ENCODE measurements at regions of chr5 and their contacts with region 1.

Region 1: DNA sequence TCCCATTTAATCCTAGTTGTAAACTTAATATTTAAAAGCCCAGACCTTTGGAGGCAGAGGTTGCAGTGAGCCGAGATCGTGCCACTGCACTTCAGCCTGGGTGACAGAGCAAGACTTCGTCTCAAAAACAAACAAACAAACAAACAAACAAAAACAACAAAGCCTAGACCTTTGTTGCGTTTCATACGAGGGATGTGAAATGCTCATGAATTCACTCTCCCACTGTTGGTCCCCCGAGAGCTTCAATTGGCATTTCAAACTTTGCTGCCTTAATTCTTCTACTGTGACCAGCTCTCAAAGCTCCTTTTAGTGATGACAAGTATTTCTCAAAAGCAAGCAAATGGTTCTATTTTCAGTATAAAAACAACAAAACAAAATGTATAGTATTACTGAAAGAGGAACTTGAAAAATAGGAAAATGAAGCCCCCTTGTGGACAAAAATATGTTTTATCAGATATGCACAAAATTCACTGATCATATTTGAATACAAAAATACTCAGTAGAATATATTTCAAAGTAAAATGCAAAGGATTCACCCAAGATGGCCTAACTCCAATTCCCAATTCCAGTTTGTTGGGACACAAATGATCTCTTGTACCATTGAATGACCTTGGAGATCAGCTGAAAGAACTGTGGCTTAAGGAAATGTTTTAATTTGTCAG is 140.4 kb downstream of the ESM1 start:
- DNase-seq: no peak
- ATAC-seq: peak; percentile 69
- H3K4me3 Mint-ChIP-seq: no peak overlapping the region
- H3K27ac Mint-ChIP-seq: no peak overlapping the region
- H3K4me1 Mint-ChIP-seq: peaks cover 18% of the 10 kb centered on the region
- H3K27me3 Mint-ChIP-seq: peaks cover 16% of the 10 kb centered on the region

Region 2: GRCh38 chr5:54601411-54602230 is 243.4 kb before region 1 on chr5:
- CTCF ChIA-PET with region 1: no interaction called
- DNase-seq: no peak
- ATAC-seq: no peak
- H3K4me3 Mint-ChIP-seq: no peak overlapping the region
- H3K27ac Mint-ChIP-seq: no peak overlapping the region
- H3K4me1 Mint-ChIP-seq: no peaks in the 10 kb centered on the region
- H3K27me3 Mint-ChIP-seq: peaks cover 4% of the 10 kb centered on the region

Region 3: GRCh38 chr5:54743997-54744788 is 100.8 kb before region 1 on chr5:
- CTCF ChIA-PET with region 1: interaction called, 13 read pairs
- DNase-seq: peak; percentile 82
- ATAC-seq: peak; percentile 96
- H3K4me3 Mint-ChIP-seq: peak overlapping the region; percentile 23
- H3K27ac Mint-ChIP-seq: peak overlapping the region; percentile 94
- H3K4me1 Mint-ChIP-seq: peaks cover 39% of the 10 kb centered on the region
- H3K27me3 Mint-ChIP-seq: no peaks in the 10 kb centered on the region